Prostate gland (tissue), 2 donors: ENCODE measurements at regions of chr7 and their contacts with region 1.

Region 1: DNA sequence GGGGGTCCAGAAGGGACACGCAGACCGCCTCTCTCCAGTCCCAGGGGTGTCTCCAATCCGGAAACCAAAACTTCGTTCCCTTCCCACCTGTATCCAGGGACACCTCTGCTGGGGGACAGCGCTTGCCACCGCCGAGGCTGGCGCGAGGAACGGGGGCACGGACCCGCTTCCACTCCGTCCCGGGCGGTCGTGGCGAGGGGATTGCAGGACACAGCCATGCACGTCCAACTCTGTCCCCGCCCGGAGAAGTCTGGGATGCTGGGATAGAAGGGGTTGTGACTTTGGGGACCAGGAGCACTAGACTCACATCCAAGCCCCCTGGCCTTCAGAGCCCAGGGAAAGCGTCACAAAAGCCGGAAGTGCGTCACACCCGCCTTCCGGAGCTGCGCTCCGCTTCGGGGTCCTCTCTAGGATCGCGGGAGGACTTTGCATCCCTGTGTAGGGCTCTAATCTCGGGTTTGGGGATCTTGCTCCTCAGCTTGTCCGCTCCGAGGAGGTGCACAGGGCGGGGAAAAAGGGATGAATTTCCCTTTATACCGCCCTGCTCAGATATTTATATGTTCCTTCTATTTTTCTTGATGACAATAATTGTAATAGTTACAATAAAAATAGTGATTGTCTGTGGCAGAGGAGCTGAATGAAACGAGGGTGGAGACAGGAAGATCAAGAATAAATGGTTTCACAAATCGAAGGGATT is at the start of gene FAM200A:
- DNase-seq: peak; percentile 83
- H3K4me3 ChIP-seq: peak within 1 kb of the TSS; percentile 54 to 84
- H3K27ac ChIP-seq: peak within 1 kb of the TSS; percentile 76 to 85
- H3K4me1 ChIP-seq: no peaks in the 10 kb centered on the region
- H3K27me3 ChIP-seq: no peaks in the 10 kb centered on the region
- CTCF ChIP-seq: no peak
- POLR2A ChIP-seq: peak; percentile 47
- total RNA-seq, gene FAM200A: 5.5 to 11.2 TPM

Region 2: DNA sequence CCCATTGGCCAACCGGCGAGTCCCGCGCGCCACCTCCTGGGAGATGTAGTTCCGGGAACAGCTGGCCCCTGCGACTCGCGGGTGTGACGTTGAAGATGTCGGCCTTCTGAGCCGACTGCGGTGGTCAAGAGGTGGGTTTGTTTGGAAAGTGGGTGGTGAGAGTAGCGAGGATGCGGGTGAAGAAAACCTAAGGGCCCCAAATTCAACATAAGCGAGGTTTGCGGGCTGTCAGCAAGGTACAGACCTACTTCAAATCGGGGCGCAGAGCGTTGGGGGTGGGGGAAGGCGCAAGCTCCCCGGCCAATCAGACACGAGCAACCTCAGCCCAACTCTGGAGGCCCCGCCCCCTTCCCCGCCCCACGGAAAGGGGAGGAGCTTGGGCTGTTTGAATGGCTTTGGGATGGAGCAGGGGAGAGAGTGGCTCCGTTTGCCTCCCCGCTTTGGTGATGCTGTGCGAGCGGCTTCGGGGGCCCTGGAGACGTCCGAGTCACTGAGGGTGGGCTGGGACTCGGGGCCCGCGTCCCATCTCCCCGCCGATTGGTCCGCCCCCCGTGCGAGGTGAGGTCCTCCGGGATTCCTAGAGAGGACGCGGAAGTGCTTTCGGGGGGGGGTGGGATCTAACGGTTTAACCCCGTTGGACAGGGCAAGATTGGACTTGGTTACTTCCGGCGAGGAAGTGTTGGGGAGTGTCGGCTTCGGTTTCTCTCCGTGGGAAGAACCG is 47.2 kb before region 1 on chr7 and contains the start of gene ZKSCAN5:
- intact Hi-C with region 1: loop called (anchors 5 kb)
- DNase-seq: peak; percentile 97
- H3K4me3 ChIP-seq: peak within 1 kb of the TSS; percentile 51 to 72
- H3K27ac ChIP-seq: peak within 1 kb of the TSS; percentile 82 to 95
- H3K4me1 ChIP-seq: peaks cover 19% of the 10 kb centered on the region
- H3K27me3 ChIP-seq: no peaks in the 10 kb centered on the region
- CTCF ChIP-seq: peak in 3 of 4 experiments; percentile 37 to 54 (median 44)
- POLR2A ChIP-seq: peak; percentile 27
- total RNA-seq, gene ZKSCAN5: 7.8 to 13.2 TPM

Region 3: GRCh38 chr7:99837649-99838361 is 285.9 kb after region 1 on chr7:
- intact Hi-C with region 1: no loop called
- DNase-seq: no peak
- H3K4me3 ChIP-seq: no peak overlapping the region
- H3K27ac ChIP-seq: peak overlapping the region; percentile 66 to 70
- H3K4me1 ChIP-seq: no peaks in the 10 kb centered on the region
- H3K27me3 ChIP-seq: no peaks in the 10 kb centered on the region
- CTCF ChIP-seq: peak in 2 of 4 experiments; percentile 53 to 60
- POLR2A ChIP-seq: no peak

Region 4: DNA sequence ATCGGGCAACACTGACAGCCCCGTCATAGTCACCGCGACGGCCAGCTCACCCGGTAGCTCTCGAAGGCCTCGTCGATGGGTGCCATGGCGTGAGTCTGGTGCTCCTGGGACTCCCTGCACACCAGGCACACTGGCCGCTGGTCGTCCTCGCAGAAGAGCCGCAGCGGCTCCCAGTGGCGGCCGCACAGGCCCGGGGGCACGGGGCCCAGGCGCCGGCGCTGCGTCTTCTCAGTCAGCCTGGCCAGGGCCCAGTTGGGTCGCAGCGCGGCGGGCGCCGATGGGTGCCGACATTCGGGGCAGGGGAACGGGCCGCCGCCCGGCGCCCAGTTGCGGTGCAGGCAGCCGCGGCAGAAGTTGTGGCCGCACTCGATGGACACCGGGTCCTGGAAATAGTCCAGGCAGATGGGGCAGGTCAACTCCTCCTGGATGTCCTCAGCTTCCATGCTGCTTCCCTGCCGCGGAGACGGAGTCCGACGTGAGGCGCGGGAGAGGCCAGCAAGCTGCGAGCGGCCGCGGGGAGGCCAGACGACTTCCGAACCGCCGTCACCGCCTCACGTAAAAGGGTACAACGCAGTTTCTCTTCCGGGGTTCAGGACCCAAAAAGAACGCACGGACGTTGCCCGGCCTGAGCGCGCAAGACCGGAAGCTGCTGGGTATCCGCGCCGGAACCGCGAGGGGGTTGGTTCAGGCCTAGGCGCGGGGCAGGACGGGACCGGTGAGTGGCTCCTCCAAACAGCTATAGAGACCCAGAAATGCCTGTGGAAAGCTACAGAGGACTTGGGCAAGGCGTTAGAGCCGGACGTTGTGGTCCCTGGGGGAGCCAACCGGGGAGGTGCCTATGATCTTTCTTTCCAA is 367.3 kb after region 1 on chr7 and contains the start of gene TRIM4:
- intact Hi-C with region 1: loop called (anchors 10 kb)
- DNase-seq: peak; percentile 85
- H3K4me3 ChIP-seq: peak within 1 kb of the TSS; percentile 71 to 89
- H3K27ac ChIP-seq: peak within 1 kb of the TSS; percentile 91 to 92
- H3K4me1 ChIP-seq: no peaks in the 10 kb centered on the region
- H3K27me3 ChIP-seq: no peaks in the 10 kb centered on the region
- CTCF ChIP-seq: peak in 3 of 4 experiments; percentile 20 to 51 (median 42)
- POLR2A ChIP-seq: peak; percentile 76
- total RNA-seq, gene TRIM4: 61.0 to 72.8 TPM